ENCODE measurements at regions of chr15 and their contacts with region 1.

Region 1: DNA sequence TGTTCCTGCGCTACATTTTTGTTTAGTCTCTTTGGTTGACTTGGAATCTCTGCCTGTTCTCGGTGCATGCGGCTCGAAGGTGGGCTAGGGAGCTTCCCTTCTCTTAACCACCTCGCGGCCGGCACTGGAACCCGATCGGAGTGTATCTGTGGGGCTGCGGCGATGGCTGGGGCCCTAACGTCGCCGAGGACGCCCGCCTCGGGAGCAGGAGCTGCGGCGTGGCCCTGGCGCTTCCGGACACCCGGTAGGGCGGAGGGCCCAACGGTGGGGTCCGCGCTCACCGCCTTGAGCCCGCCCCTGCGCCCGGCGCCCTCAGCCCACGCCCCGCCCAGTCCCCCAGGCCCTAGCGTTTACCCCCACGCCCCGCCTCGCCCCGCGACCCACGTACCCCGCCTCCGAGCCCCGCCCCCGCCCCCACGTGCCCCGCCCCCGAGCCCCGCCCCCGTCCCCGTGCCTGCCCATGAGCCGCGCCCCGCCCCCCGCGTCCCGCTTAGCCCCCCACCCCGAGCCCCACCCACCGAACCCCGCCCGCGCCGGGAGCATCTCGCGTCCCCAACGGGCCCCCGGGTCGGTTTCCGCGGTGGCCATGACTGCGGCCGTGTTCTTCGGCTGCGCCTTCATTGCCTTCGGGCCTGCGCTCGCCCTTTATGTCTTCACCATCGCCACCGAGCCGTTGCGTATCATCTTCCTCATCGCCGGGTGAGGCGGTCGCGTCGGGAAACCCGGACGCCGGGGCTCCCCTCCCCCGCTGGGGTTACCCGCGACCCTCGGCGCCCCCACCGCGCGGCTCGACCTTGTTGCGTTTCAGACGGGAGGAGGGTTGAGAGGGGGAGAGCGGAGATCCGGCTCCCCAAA is at the start of gene APH1B:
- DNase-seq: peak; percentile 60 to 96 (median 72)

Region 2: DNA sequence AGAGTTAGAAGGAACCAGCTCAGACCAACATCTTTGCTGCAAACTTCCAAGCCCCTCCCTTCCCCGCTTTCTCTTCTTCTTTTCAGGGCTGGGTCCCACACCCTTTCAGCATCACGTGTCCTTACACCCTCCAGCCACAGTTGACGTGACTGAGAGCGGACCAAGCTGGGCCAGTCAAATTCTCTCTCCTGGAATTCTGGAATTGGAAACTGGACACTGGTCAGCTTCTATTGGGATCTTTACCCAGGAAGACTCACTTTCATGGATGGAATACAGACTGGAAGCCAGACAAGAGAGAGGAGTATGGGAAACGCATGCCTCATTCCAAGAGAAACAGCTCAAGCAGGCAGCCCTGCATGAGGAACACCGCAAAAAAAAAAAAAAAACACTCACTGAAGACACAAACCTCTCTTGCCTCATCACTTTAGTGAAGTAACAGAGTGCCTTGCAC is 247.1 kb before region 1 on chr15:
- intact Hi-C with region 1: no loop called
- DNase-seq: peak in 1 of 10 donors; percentile 66

Region 3: GRCh38 chr15:63122002-63122893 is 155.0 kb before region 1 on chr15:
- intact Hi-C with region 1: loop called (anchors 10 kb)
- DNase-seq: peak; percentile 36 to 96 (median 68)

Region 4: GRCh38 chr15:63157118-63157843 is 120.0 kb before region 1 on chr15 and contains the start of gene RPS27L:
- intact Hi-C with region 1: loop called (anchors 5 kb)
- DNase-seq: peak; percentile 82 to 99 (median 92)

Region 5: DNA sequence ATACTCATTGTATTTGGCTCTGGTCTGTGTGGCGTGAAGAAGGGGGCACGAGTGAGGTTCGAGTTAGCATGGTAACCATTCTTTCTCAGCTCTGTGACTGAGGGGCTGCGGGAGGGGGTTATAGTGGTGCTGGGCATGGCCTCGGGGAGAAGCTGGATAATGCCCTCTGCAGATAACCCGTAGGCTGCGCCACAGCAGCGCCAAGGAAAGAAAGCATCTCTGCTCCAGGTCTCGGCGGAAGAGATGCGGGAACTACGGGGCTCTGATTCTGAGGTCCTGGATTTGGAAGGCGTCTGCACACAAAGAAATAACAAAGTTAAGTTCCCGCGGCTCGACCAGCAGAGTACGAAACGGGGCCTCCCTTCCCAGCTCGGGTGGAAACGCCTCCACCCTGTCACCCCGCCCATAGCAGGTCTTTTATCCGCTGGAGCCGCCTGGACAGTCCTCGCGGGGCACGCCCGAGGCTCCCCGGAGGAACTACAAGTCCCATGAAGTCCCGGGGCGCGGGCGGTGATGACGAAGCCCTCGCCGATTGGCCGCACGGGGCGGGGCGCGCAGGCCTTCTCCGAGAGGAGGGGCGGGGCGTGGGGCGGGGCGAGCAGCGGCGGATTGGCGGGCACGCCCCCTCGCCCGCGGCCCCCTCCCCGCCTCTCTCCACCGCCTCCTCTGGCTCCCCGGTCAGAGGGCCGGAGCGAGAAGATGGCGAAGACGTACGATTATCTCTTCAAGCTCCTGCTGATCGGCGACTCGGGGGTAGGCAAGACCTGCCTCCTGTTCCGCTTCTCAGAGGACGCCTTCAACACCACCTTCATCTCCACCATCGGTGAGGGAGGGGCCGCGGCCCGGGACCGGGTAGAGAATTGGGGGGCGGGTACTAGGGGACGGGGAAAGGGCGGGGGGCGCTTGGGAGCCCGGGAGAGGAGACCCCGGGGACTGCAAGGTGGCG is 88.1 kb before region 1 on chr15 and contains the start of gene RAB8B:
- intact Hi-C with region 1: loop called (anchors 2 kb)
- DNase-seq: peak; percentile 95 to 100 (median 99)